ENCODE measurements at regions of chr9 and their contacts with region 1.

Region 1: DNA sequence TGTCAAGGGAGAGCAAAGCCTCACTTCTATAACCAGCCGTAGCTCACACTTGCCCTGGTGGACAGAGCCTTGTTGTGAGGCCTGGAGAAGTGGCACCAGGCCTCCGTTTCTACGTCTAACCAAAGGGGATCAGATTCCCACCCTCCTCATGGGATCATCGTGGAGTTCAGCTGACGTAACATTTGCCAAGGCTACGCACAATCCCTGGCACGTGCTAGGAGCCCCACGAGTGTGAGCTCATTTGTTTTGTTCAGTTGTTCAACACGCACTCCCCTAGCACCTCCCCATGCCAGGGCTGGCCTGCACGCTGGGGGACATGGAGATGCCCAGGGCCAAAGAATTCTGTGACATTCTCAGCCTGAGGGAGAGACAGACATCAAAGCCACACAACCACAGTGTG is 23.1 kb downstream of the ADGRD2 start:
- DNase-seq: no peak
- H3K4me3 ChIP-seq: no peak overlapping the region
- H3K27ac ChIP-seq: no peak overlapping the region
- H3K4me1 ChIP-seq: peaks cover 0 to 7% of the 10 kb centered on the region in 2 donors
- H3K27me3 ChIP-seq: peaks cover 0 to 33% of the 10 kb centered on the region in 2 donors
- CTCF ChIP-seq: no peak
- POLR2A ChIP-seq: no peak

Region 2: DNA sequence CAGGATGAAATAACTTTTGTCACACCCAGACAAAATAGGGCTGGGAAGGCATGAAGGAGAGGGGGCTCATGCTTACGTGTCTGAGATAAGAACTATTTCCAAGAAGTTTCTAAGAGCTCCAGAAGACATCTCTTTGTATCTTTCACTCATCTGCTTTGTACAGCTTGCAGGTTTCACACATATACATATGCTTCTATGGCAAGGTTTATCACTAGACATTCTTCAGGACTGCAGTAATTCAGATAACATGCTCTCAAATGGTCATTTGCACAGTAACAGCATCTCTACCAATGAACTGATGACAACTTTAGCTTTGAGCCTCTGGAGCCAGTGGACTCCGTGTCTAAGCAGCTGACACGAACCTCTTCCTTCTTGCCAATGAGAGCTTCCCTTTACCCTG is 1998.7 kb before region 1 on chr9:
- intact Hi-C with region 1: loop called (anchors 5 kb)
- DNase-seq: no peak
- H3K4me3 ChIP-seq: no peak overlapping the region
- H3K27ac ChIP-seq: no peak overlapping the region
- H3K4me1 ChIP-seq: no peaks in the 10 kb centered on the region
- H3K27me3 ChIP-seq: no peaks in the 10 kb centered on the region
- CTCF ChIP-seq: no peak
- POLR2A ChIP-seq: no peak

Measured in breast epithelium (tissue), 4 donors.